Psoas muscle (tissue), 8 donors: ENCODE measurements at regions of chr5 and their contacts with region 1.

Region 1: DNA sequence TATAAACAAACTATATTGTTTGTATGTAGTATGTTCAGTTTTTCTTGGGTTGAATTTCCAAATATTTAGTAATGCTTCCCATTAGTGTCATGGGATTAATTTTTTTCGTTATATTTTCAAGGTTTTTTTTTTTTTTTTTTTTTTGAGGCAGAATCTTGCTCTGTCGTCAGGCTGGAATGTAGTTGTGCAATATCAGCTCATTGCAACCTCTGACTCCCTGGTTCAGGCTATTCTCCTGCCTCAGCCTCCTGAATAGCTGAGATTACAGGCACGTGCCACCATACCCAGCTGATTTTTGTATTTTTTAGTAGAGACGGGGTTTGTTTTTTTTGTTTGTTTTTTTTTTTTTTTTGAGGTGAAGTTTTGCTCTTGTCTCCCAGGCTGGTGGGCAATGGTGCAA is 10.6 kb downstream of the DDX46 start:
- DNase-seq: no peak
- ATAC-seq: no peak
- H3K4me3 ChIP-seq: no peak overlapping the region
- H3K27ac ChIP-seq: no peak overlapping the region
- H3K4me1 ChIP-seq: no peaks in the 10 kb centered on the region
- H3K27me3 ChIP-seq: no peaks in the 10 kb centered on the region
- CTCF ChIP-seq: no peak

Region 2: GRCh38 chr5:134708301-134708700 is 60.9 kb before region 1 on chr5:
- intact Hi-C with region 1: no loop called
- DNase-seq: no peak
- ATAC-seq: no peak
- H3K4me3 ChIP-seq: no peak overlapping the region
- H3K27ac ChIP-seq: no peak overlapping the region
- H3K4me1 ChIP-seq: no peaks in the 10 kb centered on the region
- H3K27me3 ChIP-seq: no peaks in the 10 kb centered on the region
- CTCF ChIP-seq: no peak

Region 3: GRCh38 chr5:134819404-134819963 is 50.3 kb after region 1 on chr5:
- intact Hi-C with region 1: loop called in 1 of 2 experiments (anchors 5 kb)
- DNase-seq: no peak
- ATAC-seq: peak in 1 of 4 donors; percentile 32
- H3K4me3 ChIP-seq: no peak overlapping the region
- H3K27ac ChIP-seq: no peak overlapping the region
- H3K4me1 ChIP-seq: no peaks in the 10 kb centered on the region
- H3K27me3 ChIP-seq: no peaks in the 10 kb centered on the region
- CTCF ChIP-seq: no peak